PC-3 (cell line): ENCODE measurements at regions of chr5 and their contacts with region 1.

Region 1: DNA sequence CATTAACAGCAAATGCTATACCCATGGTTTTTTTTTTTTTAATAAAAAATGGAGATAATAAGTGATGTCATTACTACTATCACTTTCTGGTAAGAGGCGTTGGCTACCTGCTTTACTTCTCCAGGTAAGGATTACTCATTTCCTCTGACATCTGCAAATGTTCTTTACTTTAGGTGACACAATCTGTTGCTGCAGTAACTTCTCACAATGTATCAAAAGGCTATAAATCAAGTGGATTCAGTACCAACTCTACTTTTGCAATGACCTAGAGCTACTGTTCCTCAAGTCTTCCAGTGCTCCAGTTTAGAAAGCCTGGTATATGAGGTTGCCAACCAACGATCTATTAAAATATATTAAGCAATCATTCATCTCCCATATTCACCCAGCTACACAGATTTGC is 129.1 kb downstream of the PLK2 start:
- DNase-seq: peak; percentile 73
- ATAC-seq: peak; percentile 41
- H3K4me3 ChIP-seq: no peak overlapping the region
- H3K27ac ChIP-seq: peak overlapping the region; percentile 86
- H3K4me1 ChIP-seq: peaks cover 31% of the 10 kb centered on the region
- H3K27me3 ChIP-seq: no peaks in the 10 kb centered on the region
- CTCF ChIP-seq: no peak

Region 2: GRCh38 chr5:58156986-58157701 is 173.6 kb before region 1 on chr5:
- CTCF ChIA-PET with region 1: no interaction called
- POLR2A ChIA-PET with region 1: no interaction called
- intact Hi-C with region 1: no loop called
- DNase-seq: no peak
- ATAC-seq: no peak
- H3K4me3 ChIP-seq: no peak overlapping the region
- H3K27ac ChIP-seq: no peak overlapping the region
- H3K4me1 ChIP-seq: peaks cover 3% of the 10 kb centered on the region; the same call in 1 of the 2 replicates
- H3K27me3 ChIP-seq: no peaks in the 10 kb centered on the region
- CTCF ChIP-seq: no peak

Region 3: DNA sequence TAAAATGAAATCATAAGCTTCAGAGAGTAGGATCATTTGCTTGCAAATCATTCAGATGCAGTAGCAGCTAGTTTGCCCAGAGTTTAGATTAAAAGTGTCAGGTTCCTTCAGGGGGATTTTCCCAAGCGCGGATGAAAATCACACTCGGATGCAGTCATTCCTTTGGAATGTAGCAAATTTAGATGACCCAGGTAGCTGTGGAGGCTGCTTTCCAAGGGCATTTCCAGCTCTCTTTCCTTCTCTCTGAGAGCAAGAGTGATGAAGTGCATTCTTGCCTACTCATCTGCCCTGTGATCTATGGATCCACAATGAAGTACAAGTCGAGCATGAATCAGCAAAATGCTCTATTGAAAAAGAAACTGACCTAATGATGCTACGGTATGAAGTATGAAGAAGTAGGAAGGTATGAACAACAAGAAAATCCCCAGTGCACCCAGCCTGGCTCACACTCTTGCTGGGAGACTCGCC is 71.1 kb before region 1 on chr5:
- CTCF ChIA-PET with region 1: no interaction called
- POLR2A ChIA-PET with region 1: no interaction called
- intact Hi-C with region 1: no loop called
- DNase-seq: peak; percentile 86
- ATAC-seq: peak; percentile 96
- H3K4me3 ChIP-seq: peak overlapping the region; percentile 44
- H3K27ac ChIP-seq: peak overlapping the region; percentile 89
- H3K4me1 ChIP-seq: peaks cover 30% of the 10 kb centered on the region
- H3K27me3 ChIP-seq: no peaks in the 10 kb centered on the region
- CTCF ChIP-seq: no peak

Region 4: DNA sequence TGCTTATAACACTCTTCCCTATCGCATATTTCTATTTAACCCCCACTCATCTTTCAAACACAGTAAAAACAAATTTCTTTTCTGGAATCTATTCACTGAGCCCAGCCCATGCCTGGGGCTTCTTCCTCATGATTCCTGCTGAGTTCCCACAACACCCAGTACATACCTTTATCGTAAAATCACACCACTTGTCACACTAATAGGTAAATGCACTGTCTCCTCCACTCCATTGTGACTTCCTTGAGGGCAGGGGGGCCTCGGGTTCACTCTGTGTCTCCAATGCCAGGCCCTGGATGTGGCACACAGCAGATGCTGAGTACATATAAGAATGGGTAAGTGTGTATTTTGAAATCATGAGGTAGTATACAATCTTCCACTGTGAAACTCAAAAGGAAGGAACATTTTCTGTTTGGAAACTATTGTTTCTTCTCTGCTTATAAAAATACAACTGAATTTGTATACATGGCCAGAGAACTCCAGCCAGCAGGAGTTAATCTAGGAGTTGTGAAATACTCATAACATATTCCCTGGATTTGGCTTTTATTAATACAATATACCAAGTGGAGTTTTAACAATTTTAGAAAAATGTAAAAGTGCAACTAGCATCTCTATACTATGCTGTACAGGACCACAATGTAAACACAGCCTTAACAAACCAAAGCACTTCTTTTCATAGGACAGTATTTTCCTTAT is 121.9 kb after region 1 on chr5:
- CTCF ChIA-PET with region 1: no interaction called
- POLR2A ChIA-PET with region 1: no interaction called
- intact Hi-C with region 1: loop called (anchors 5 kb)
- DNase-seq: peak; percentile 22
- ATAC-seq: peak; percentile 41
- H3K4me3 ChIP-seq: no peak overlapping the region
- H3K27ac ChIP-seq: no peak overlapping the region
- H3K4me1 ChIP-seq: peaks cover 31% of the 10 kb centered on the region
- H3K27me3 ChIP-seq: no peaks in the 10 kb centered on the region
- CTCF ChIP-seq: no peak